Lower lobe of right lung (tissue), 2 donors: ENCODE measurements at regions of chr1 and their contacts with region 1.

Region 1: GRCh38 chr1:202009326-202010179 is 834 bp upstream of the ELF3 start:
- DNase-seq: peak; percentile 56
- ATAC-seq: peak; percentile 70
- H3K4me3 ChIP-seq: no peak overlapping the region
- H3K27ac ChIP-seq: peak overlapping the region; percentile 80
- H3K4me1 ChIP-seq: peaks cover 11% of the 10 kb centered on the region
- H3K27me3 ChIP-seq: no peaks in the 10 kb centered on the region
- CTCF ChIP-seq: peak; percentile 88

Region 2: GRCh38 chr1:201506556-201507359 is 502.8 kb before region 1 on chr1 and contains the start of gene CSRP1:
- intact Hi-C with region 1: no loop called
- DNase-seq: peak; percentile 92
- ATAC-seq: peak; percentile 91 to 94
- H3K4me3 ChIP-seq: peak within 1 kb of the TSS; percentile 79
- H3K27ac ChIP-seq: peak within 1 kb of the TSS; percentile 97
- H3K4me1 ChIP-seq: peaks cover 73% of the 10 kb centered on the region
- H3K27me3 ChIP-seq: no peaks in the 10 kb centered on the region
- CTCF ChIP-seq: no peak
- total RNA-seq, gene CSRP1: 185 TPM

Region 3: GRCh38 chr1:202112839-202113672 is 103.5 kb after region 1 on chr1:
- intact Hi-C with region 1: loop called (anchors 10 kb)
- DNase-seq: no peak
- ATAC-seq: peak; percentile 65 to 75
- H3K4me3 ChIP-seq: no peak overlapping the region
- H3K27ac ChIP-seq: peak overlapping the region; percentile 36
- H3K4me1 ChIP-seq: peaks cover 12% of the 10 kb centered on the region
- H3K27me3 ChIP-seq: no peaks in the 10 kb centered on the region
- CTCF ChIP-seq: no peak